Panc1 (cell line): ENCODE measurements at regions of chr6 and their contacts with region 1.

Region 1: GRCh38 chr6:21587179-21587924 is 6.2 kb upstream of the SOX4 start:
- DNase-seq: no peak
- ATAC-seq: peak; percentile 69
- H3K4me3 ChIP-seq: peak overlapping the region; percentile 81 to 92
- H3K27ac ChIP-seq: peak overlapping the region; percentile 92
- H3K4me1 ChIP-seq: peaks cover 14% of the 10 kb centered on the region
- H3K27me3 ChIP-seq: no peaks in the 10 kb centered on the region
- CTCF ChIP-seq: peak; percentile 29

Region 2: GRCh38 chr6:20744911-20745557 is 842.3 kb before region 1 on chr6:
- CTCF ChIA-PET with region 1: interaction called, 18 read pairs
- POLR2A ChIA-PET with region 1: no interaction called
- in situ Hi-C with region 1: no loop called
- intact Hi-C with region 1: no loop called
- DNase-seq: no peak
- ATAC-seq: no peak
- H3K4me3 ChIP-seq: no peak overlapping the region
- H3K27ac ChIP-seq: no peak overlapping the region
- H3K4me1 ChIP-seq: no peaks in the 10 kb centered on the region
- H3K27me3 ChIP-seq: no peaks in the 10 kb centered on the region
- CTCF ChIP-seq: no peak

Region 3: GRCh38 chr6:20789162-20789561 is 798.2 kb before region 1 on chr6:
- CTCF ChIA-PET with region 1: interaction called, 12 read pairs
- POLR2A ChIA-PET with region 1: no interaction called
- in situ Hi-C with region 1: no loop called
- intact Hi-C with region 1: no loop called
- DNase-seq: no peak
- ATAC-seq: no peak
- H3K4me3 ChIP-seq: no peak overlapping the region
- H3K27ac ChIP-seq: no peak overlapping the region
- H3K4me1 ChIP-seq: no peaks in the 10 kb centered on the region
- H3K27me3 ChIP-seq: no peaks in the 10 kb centered on the region
- CTCF ChIP-seq: peak; percentile 27; the same call in 1 of the 2 replicates

Region 4: DNA sequence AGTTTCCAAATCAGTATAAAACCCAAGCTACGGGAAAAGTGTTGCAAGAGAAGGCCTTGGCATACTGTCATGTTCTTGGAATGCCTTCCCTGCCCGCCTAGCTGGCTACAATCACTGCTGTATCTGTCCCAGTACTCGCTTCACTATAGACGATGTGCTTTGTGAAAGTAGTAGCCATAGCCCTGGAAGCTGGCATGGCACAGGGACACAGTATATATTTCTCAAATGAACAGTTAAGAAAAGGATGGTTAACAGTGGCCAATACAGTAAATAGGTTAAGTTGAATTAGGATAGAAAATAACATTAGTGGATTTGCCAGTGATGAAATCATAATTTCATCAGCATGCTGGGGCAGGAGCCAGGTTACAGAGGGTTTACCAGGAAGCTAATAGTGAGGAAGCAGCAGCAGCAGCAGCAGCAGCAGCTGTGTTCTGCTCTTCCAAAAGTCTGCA is 553.8 kb before region 1 on chr6:
- CTCF ChIA-PET with region 1: interaction called, 16 read pairs
- POLR2A ChIA-PET with region 1: no interaction called
- in situ Hi-C with region 1: no loop called
- intact Hi-C with region 1: no loop called
- DNase-seq: no peak
- ATAC-seq: no peak
- H3K4me3 ChIP-seq: no peak overlapping the region
- H3K27ac ChIP-seq: no peak overlapping the region
- H3K4me1 ChIP-seq: no peaks in the 10 kb centered on the region
- H3K27me3 ChIP-seq: no peaks in the 10 kb centered on the region
- CTCF ChIP-seq: no peak

Region 5: GRCh38 chr6:21214738-21215448 is 372.5 kb before region 1 on chr6:
- CTCF ChIA-PET with region 1: no interaction called
- POLR2A ChIA-PET with region 1: interaction called, 27 read pairs
- in situ Hi-C with region 1: no loop called
- intact Hi-C with region 1: no loop called
- DNase-seq: no peak
- ATAC-seq: no peak
- H3K4me3 ChIP-seq: no peak overlapping the region
- H3K27ac ChIP-seq: no peak overlapping the region
- H3K4me1 ChIP-seq: no peaks in the 10 kb centered on the region
- H3K27me3 ChIP-seq: no peaks in the 10 kb centered on the region
- CTCF ChIP-seq: no peak

Region 6: DNA sequence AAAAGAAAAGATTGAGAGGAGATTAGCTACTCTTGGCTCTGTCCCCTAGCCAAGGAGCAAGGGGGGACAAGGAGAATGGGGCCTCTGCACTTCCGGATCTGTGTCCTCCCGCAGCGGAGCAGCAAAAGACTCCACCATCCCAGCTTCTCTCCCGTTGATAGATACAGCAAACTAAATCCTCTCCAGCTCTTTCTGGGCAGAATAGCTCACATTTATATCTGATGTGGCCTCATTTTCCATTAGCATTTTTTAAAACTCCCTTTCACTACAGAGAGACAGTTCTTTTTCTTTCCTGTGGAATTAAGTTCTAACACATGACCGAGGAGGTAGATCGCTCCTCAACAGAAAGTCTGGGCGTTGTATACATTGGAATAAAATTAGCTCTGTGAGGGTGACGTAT is 254.7 kb before region 1 on chr6:
- CTCF ChIA-PET with region 1: interaction called, 12 read pairs
- POLR2A ChIA-PET with region 1: no interaction called
- in situ Hi-C with region 1: no loop called
- intact Hi-C with region 1: no loop called
- DNase-seq: no peak
- ATAC-seq: no peak
- H3K4me3 ChIP-seq: no peak overlapping the region
- H3K27ac ChIP-seq: no peak overlapping the region
- H3K4me1 ChIP-seq: no peaks in the 10 kb centered on the region; the same call in 1 of the 2 replicates
- H3K27me3 ChIP-seq: no peaks in the 10 kb centered on the region
- CTCF ChIP-seq: no peak

Region 7: DNA sequence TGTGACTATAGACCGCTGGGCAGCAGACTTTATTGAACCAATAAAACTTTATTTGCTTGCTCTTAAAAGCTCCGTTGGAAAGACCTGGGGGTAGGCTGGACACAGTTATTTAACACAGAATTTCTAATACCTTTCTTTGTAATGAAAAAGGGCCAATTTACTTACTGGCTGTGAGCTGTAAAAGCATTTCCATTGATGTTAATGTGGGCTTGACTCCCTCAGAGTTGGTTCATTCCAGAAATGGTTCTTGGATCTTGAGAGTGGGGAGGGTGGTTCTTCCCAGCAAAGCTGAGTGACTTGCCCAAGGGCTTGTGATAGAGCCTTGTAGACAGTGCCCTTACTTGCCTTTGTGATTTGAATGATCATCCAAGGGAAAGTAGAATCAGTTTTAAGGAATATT is 106.8 kb after region 1 on chr6:
- CTCF ChIA-PET with region 1: no interaction called
- POLR2A ChIA-PET with region 1: no interaction called
- in situ Hi-C with region 1: no loop called
- intact Hi-C with region 1: no loop called
- DNase-seq: no peak
- ATAC-seq: no peak
- H3K4me3 ChIP-seq: no peak overlapping the region
- H3K27ac ChIP-seq: peak overlapping the region; percentile 30; the same call in 1 of the 2 replicates
- H3K4me1 ChIP-seq: no peaks in the 10 kb centered on the region
- H3K27me3 ChIP-seq: no peaks in the 10 kb centered on the region
- CTCF ChIP-seq: no peak